Activated naive CD8-positive, alpha-beta T cell treated with anti-CD3 and anti-CD28 coated beads, Interleukin-2, amount 10 ng/mL, durations not matched to agents 7 days and 5 days (primary cell): ENCODE measurements at regions of chr12 and their contacts with region 1.

Region 1: GRCh38 chr12:10395390-10395998 is 5.7 kb upstream of the KLRK1 start:
- DNase-seq: peak; percentile 35
- ATAC-seq: peak; percentile 55
- H3K4me3 Mint-ChIP-seq: peak overlapping the region; percentile 69
- H3K27ac Mint-ChIP-seq: peak overlapping the region; percentile 94
- H3K4me1 Mint-ChIP-seq: peaks cover 60% of the 10 kb centered on the region
- H3K27me3 Mint-ChIP-seq: no peaks in the 10 kb centered on the region

Region 2: GRCh38 chr12:10354502-10354901 is 41.0 kb before region 1 on chr12:
- POLR2A ChIA-PET with region 1: no interaction called
- DNase-seq: no peak
- ATAC-seq: no peak
- H3K4me3 Mint-ChIP-seq: no peak overlapping the region
- H3K27ac Mint-ChIP-seq: no peak overlapping the region
- H3K4me1 Mint-ChIP-seq: peaks cover 13% of the 10 kb centered on the region
- H3K27me3 Mint-ChIP-seq: no peaks in the 10 kb centered on the region

Region 3: DNA sequence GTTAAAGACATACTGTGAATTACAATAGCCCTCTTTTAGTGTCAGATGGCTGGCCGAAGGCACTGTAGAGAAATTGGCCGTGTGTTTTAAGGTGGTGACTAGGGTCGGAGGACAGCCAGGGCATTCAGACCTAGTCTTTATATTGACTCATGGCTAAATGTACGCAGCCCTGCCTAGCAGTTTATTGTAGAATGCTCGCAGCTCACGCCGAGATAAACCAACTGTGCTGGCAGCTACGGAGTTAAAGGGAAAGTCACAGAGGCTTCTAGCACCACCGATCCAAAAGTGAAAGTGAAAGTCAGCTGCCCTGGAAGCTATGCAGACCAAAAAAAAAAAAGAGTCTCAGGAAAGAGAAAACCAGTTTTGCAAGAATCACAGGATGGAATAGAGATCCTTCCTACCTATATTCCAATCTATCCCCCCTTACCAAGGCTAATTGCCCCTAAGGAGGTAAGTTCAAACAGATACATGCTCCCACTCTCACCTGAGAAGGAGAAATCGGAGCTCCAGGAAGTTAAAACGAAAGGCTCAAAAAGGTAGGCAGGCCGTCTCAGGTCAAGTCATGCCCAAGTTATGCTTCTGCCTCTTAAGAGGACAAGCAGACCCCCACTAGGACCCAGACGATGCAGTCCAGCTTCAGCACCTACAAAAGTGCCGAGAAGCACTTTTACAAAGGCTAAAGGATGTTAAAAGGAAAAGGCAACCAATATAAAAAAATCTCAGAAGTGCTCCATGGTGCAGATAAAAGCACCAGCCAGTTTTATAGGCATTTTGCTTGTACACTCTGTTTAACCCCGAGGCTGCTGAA is 30.5 kb before region 1 on chr12:
- POLR2A ChIA-PET with region 1: interaction called, 24 read pairs
- DNase-seq: peak; percentile 60
- ATAC-seq: peak; percentile 59
- H3K4me3 Mint-ChIP-seq: no peak overlapping the region
- H3K27ac Mint-ChIP-seq: no peak overlapping the region
- H3K4me1 Mint-ChIP-seq: peaks cover 36% of the 10 kb centered on the region
- H3K27me3 Mint-ChIP-seq: no peaks in the 10 kb centered on the region

Region 4: DNA sequence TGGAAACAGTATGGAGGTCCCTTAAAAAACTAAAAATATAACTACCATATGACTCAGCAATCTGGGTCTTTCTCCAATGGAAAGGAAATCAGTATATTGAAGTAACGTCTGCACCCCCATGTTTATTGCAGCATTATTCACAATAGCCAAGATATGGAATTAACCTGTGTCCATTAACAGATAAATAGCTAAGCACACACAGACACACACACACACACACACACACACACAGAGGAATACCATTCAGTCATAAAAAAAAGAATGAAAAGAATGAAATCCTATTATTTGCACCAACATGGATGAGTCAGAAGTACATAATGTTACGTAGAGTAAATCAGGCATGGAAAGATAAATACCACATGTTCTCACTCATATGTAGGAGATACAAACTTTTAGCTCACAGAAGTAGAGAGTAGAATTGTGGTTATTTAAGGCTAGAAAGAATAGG is 10.3 kb before region 1 on chr12:
- POLR2A ChIA-PET with region 1: interaction called, 40 read pairs
- DNase-seq: no peak
- ATAC-seq: peak; percentile 43
- H3K4me3 Mint-ChIP-seq: peak overlapping the region; percentile 84
- H3K27ac Mint-ChIP-seq: peak overlapping the region; percentile 88
- H3K4me1 Mint-ChIP-seq: peaks cover 61% of the 10 kb centered on the region
- H3K27me3 Mint-ChIP-seq: no peaks in the 10 kb centered on the region

Region 5: GRCh38 chr12:10406725-10407124 is 11.2 kb after region 1 on chr12:
- POLR2A ChIA-PET with region 1: interaction called, 10 read pairs
- DNase-seq: peak; percentile 39
- ATAC-seq: peak; percentile 7
- H3K4me3 Mint-ChIP-seq: peak overlapping the region; percentile 91
- H3K27ac Mint-ChIP-seq: peak overlapping the region; percentile 87
- H3K4me1 Mint-ChIP-seq: peaks cover 40% of the 10 kb centered on the region
- H3K27me3 Mint-ChIP-seq: no peaks in the 10 kb centered on the region

Region 6: GRCh38 chr12:10652192-10652591 is 256.7 kb after region 1 on chr12:
- POLR2A ChIA-PET with region 1: no interaction called
- DNase-seq: no peak
- ATAC-seq: no peak
- H3K4me3 Mint-ChIP-seq: no peak overlapping the region
- H3K27ac Mint-ChIP-seq: no peak overlapping the region
- H3K4me1 Mint-ChIP-seq: peaks cover 1% of the 10 kb centered on the region
- H3K27me3 Mint-ChIP-seq: peaks cover 2% of the 10 kb centered on the region